ENCODE measurements at regions of chr10 and their contacts with region 1.

Region 1: DNA sequence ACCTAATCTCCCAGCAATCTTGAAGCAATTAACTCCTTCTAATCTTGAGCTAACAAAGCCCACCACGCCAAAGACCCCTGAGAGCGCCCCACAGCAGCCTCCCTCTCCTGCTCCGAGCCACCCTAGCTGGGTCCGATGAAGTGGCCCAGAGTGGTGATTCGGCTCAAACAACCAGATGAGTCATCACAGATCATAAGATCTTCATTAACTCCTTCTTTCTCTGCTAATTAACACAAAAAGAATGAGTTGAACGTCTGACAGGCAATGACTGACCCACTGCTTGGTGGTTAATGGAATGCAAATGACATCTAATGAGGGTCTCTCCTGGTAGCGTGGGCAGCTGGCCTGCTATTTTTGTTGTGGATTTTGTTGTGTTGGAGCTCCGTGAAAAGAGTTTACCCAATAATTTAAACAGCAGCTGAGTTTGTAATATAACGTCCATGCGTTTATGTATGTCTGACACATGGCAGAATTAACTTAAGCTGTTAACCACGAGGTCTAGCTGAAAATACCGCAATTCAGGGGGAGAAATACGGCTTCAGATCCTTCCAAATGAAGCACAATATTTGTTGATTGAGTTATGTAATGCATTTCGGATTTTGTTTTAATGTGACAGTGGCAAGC is 161.4 kb downstream of the RAB11FIP2 start:
- DNase-seq: no peak

Region 2: GRCh38 chr10:117094856-117095255 is 790.5 kb before region 1 on chr10:
- intact Hi-C with region 1: no loop called
- DNase-seq: no peak

Region 3: GRCh38 chr10:117126034-117126433 is 759.3 kb before region 1 on chr10:
- intact Hi-C with region 1: loop called in 1 of 2 experiments (anchors 5 kb)
- DNase-seq: no peak

Region 4: DNA sequence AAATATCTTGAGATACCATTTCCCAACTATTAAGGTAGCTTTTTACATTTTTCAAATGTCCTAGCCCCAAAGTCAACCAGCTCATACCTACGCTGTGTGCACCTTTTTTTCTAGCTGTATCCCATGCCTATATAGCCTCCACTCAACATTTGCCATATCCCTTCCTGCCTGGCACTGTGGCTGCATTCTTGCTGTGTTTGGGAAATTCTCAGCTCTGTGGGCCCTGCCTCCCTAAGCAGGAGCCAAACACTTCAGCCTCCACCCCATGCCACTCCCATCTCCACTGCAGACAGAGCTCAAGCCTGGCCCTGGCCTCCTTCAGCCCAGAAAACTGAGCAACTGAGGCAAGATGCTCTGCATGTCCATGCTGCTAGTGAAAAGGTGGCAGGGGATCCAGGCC is 20.1 kb after region 1 on chr10:
- intact Hi-C with region 1: no loop called
- DNase-seq: no peak

Measured in posterior vena cava (tissue), 2 donors.